ENCODE measurements at regions of chr5 and their contacts with region 1.

Region 1: DNA sequence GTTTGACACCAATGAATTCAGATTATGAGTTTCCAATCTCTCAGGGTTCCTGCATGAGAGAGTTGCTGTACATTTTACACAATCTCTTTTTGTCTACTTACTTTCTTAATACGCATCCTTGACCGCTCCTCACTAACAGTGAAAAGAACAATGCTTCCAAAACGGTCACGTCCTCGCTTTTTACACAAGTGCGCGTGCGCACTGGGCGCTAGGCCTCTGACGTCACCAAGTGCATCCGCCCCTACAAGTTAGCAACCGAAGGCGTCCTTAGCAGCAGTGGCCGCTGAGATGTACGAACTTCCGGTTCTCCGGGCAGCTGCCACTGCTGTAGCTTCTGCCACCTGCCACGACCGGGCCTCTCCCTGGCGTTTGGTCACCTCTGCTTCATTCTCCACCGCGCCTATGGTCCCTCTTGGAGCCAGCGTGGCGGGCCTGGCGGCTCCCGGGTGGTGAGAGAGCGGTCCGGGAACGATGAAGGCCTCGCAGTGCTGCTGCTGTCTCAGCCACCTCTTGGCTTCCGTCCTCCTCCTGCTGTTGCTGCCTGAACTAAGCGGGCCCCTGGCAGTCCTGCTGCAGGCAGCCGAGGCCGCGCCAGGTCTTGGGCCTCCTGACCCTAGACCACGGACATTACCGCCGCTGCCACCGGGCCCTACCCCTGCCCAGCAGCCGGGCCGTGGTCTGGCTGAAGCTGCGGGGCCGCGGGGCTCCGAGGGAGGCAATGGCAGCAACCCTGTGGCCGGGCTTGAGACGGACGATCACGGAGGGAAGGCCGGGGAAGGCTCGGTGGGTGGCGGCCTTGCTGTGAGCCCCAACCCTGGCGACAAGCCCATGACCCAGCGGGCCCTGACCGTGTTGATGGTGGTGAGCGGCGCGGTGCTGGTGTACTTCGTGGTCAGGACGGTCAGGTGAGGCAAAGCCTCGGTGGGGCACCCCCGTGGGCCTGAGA is at the start of gene FAM174A:
- DNase-seq: peak; percentile 96 to 98 (median 97)
- ATAC-seq: peak; percentile 98 to 99 (median 99)
- H3K4me3 ChIP-seq: peak within 1 kb of the TSS; percentile 56 to 94 (median 76)
- H3K27ac ChIP-seq: peak within 1 kb of the TSS; percentile 62 to 95 (median 90)
- H3K4me1 ChIP-seq: peaks cover 3 to 39% (median 22%) of the 10 kb centered on the region in 12 donors
- H3K27me3 ChIP-seq: no peaks in the 10 kb centered on the region
- CTCF ChIP-seq: peak in 1 of 12 donors; percentile 10
- POLR2A ChIP-seq: peak in 1 of 2 donors; percentile 77
- total RNA-seq, gene FAM174A: 15.9 to 38.6 (median 20.4) TPM

Region 2: DNA sequence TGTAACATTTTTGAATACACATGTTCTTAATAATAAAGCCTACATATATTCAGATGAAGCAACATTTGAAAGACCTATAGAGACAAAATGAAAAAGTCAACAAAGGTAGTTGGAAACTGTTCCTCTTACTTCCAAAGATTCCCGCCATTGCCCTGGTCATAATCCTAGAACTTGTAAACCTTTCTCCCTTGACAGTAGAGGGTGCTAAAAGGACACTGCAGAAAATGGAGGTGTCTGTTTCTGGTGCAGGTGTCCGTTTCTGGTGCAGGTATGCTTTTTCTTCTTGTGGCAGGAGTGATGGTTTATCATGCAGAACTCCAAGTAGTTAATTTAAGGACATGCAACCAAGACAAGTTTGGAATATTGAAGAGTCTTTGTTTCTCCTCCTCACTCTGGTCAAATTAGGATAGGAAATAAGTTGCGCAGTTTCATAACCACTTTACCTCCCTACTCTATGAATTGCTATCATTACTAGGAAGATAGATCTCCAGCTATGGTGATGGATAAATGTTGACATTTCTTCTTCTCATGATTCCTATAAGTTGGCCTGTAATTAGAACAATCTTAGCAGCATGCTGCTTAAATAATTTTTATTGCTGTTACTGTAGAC is 56.1 kb before region 1 on chr5:
- intact Hi-C with region 1: no loop called
- DNase-seq: no peak
- ATAC-seq: no peak
- H3K4me3 ChIP-seq: no peak overlapping the region
- H3K27ac ChIP-seq: no peak overlapping the region
- H3K4me1 ChIP-seq: no peaks in the 10 kb centered on the region
- H3K27me3 ChIP-seq: no peaks in the 10 kb centered on the region
- CTCF ChIP-seq: peak; percentile 21 to 51 (median 30)
- POLR2A ChIP-seq: no peak

Region 3: GRCh38 chr5:100576217-100576751 is 41.0 kb after region 1 on chr5:
- intact Hi-C with region 1: loop called in 2 of 10 experiments (anchors 5 kb)
- DNase-seq: no peak
- ATAC-seq: peak in 1 of 4 donors; percentile 41
- H3K4me3 ChIP-seq: no peak overlapping the region
- H3K27ac ChIP-seq: peak overlapping the region; percentile 14 to 76 (median 50)
- H3K4me1 ChIP-seq: peaks cover 0 to 32% (median 11%) of the 10 kb centered on the region in 12 donors
- H3K27me3 ChIP-seq: no peaks in the 10 kb centered on the region
- CTCF ChIP-seq: no peak
- POLR2A ChIP-seq: no peak